Vagina (tissue), 2 donors: ENCODE measurements at regions of chr22 and their contacts with region 1.

Region 1: GRCh38 chr22:33209930-33210784 is 152.0 kb upstream of the SYN3 start:
- DNase-seq: no peak
- H3K4me3 ChIP-seq: no peak overlapping the region
- H3K27ac ChIP-seq: no peak overlapping the region
- H3K4me1 ChIP-seq: no peaks in the 10 kb centered on the region
- H3K27me3 ChIP-seq: no peaks in the 10 kb centered on the region
- CTCF ChIP-seq: no peak
- POLR2A ChIP-seq: no peak

Region 2: GRCh38 chr22:33018232-33018864 is 191.8 kb before region 1 on chr22:
- intact Hi-C with region 1: loop called (anchors 10 kb)
- DNase-seq: no peak
- H3K4me3 ChIP-seq: no peak overlapping the region
- H3K27ac ChIP-seq: no peak overlapping the region
- H3K4me1 ChIP-seq: no peaks in the 10 kb centered on the region
- H3K27me3 ChIP-seq: no peaks in the 10 kb centered on the region
- CTCF ChIP-seq: peak; percentile 38 to 59 (median 58)
- POLR2A ChIP-seq: no peak

Region 3: GRCh38 chr22:33105501-33105911 is 104.7 kb before region 1 on chr22:
- intact Hi-C with region 1: no loop called
- DNase-seq: no peak
- H3K4me3 ChIP-seq: no peak overlapping the region
- H3K27ac ChIP-seq: no peak overlapping the region
- H3K4me1 ChIP-seq: no peaks in the 10 kb centered on the region
- H3K27me3 ChIP-seq: no peaks in the 10 kb centered on the region
- CTCF ChIP-seq: no peak
- POLR2A ChIP-seq: no peak

Region 4: DNA sequence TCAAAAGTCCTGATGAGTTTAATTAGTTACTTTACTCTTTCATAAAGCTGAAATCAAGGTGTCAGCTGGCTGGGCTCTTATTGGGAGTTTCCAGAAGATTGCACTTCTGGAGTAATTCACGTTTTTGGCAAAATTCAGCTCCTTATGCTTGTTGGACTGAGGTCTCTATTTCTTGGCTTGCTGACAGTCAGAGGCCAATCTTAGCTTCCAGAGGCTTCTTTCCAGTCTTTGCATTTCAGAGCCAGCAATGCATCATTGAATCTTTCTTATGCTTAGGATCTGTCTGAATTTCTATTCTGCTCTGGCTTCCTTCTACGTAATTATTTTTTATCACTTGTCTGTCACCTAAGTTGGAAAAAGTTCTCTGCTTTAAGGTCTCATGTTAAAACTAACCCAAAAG is 60.5 kb before region 1 on chr22:
- intact Hi-C with region 1: no loop called
- DNase-seq: no peak
- H3K4me3 ChIP-seq: no peak overlapping the region
- H3K27ac ChIP-seq: no peak overlapping the region
- H3K4me1 ChIP-seq: no peaks in the 10 kb centered on the region
- H3K27me3 ChIP-seq: no peaks in the 10 kb centered on the region
- CTCF ChIP-seq: no peak
- POLR2A ChIP-seq: no peak

Region 5: DNA sequence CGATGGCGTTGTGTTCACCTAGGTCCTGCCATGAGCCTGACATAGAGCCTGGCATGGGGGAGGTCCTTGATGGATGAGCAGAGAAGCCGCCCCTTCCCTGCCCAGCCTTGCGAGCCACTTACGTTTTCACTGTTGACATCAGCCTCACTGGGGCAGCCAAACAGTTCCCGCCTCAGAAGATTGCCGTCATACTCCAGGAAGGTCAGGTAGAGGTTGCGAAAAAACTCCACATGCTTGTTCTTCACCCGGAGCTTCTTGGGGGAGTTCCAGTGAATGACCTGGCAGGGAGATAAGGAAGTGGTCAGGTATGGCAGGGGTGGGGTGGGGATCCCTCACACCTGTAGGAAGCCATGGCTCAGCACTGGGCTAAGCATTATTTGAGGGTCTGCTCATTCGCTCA is 127.4 kb after region 1 on chr22:
- intact Hi-C with region 1: no loop called
- DNase-seq: no peak
- H3K4me3 ChIP-seq: no peak overlapping the region
- H3K27ac ChIP-seq: no peak overlapping the region
- H3K4me1 ChIP-seq: no peaks in the 10 kb centered on the region
- H3K27me3 ChIP-seq: no peaks in the 10 kb centered on the region
- CTCF ChIP-seq: no peak
- POLR2A ChIP-seq: no peak